Activated CD4-positive, alpha-beta memory T cell treated with anti-CD3 and anti-CD28 coated beads, Interleukin-2, amount 10 ng/mL, durations not matched to agents 7 days and 5 days (primary cell): ENCODE measurements at regions of chr1 and their contacts with region 1.

Region 1: DNA sequence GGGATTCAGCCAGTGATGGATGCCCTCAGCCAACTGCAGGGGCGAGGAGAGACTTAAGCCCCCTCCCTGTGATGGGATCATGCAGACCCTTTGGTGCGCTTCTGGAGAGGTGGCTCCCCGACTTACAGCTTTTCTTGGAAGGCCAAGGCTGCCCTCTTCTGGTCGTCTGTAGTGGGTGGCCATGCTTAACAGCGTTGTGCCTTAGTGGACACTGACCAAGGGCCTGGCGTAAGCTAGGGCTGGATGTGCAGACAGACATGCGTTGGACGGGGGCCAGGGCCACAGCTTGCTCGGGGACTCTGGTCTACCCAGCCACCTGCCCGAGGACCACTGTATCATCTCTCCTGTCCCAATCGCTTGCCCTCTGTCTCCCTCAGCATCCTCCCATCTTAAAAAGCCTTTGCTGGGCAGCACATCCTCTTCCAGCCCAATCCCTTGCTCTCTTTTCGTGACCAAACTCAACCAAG is 5.5 kb downstream of the AZIN2 start:
- DNase-seq: peak; percentile 56
- H3K4me3 Mint-ChIP-seq: no peak overlapping the region
- H3K27ac Mint-ChIP-seq: no peak overlapping the region
- H3K4me1 Mint-ChIP-seq: peaks cover 32% of the 10 kb centered on the region
- H3K27me3 Mint-ChIP-seq: peaks cover 16% of the 10 kb centered on the region

Region 2: GRCh38 chr1:32876341-32877210 is 209.8 kb before region 1 on chr1:
- CTCF ChIA-PET with region 1: interaction called, 40 read pairs
- POLR2A ChIA-PET with region 1: no interaction called
- DNase-seq: peak; percentile 74
- H3K4me3 Mint-ChIP-seq: no peak overlapping the region
- H3K27ac Mint-ChIP-seq: no peak overlapping the region
- H3K4me1 Mint-ChIP-seq: peaks cover 9% of the 10 kb centered on the region
- H3K27me3 Mint-ChIP-seq: peaks cover 39% of the 10 kb centered on the region

Region 3: DNA sequence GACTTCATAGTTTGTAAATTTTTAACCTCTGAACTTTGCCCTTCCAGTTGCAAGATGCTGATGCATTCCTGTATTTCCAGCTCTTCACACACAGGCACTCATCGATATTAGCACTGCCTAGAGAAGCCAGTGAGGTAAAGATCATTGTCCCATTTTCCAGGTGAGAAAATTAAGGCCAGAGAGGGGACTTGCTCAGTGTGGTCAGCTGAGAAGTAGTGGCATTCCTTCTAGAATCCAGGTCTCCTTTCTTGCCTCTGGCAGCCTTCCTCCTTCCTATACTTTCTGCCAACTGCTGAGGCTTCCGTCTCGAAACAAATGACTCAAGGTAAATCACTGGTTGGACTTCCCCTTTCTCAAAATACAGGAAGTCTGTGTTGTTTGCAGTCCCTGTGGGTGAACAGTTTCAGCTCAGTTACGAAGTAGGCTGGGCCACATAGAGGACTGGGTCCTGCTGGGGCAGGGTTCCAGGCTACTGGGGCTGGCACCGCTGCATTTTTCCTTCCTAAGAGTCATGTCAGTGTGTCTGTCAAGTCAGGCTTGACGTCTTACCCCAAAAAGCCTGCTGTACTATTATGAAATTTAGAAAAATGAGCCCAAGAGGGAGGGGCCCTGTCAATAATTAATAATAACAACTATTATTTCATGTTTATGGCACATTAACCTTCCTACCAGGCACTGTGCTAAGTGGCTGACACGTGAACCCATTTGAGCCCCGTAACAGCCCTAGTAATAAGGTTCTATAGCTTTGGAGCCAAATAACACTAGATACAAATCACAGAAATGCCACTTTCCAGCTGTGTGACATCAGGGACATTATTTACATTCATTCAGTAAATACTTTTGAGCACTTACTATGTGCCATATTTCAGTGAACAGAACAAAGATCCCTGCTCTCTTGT is 105.2 kb before region 1 on chr1:
- CTCF ChIA-PET with region 1: no interaction called
- POLR2A ChIA-PET with region 1: no interaction called
- DNase-seq: peak; percentile 73
- H3K4me3 Mint-ChIP-seq: peak overlapping the region; percentile 56
- H3K27ac Mint-ChIP-seq: peak overlapping the region; percentile 87
- H3K4me1 Mint-ChIP-seq: peaks cover 67% of the 10 kb centered on the region
- H3K27me3 Mint-ChIP-seq: no peaks in the 10 kb centered on the region

Region 4: GRCh38 chr1:33137800-33138199 is 51.4 kb after region 1 on chr1:
- CTCF ChIA-PET with region 1: no interaction called
- POLR2A ChIA-PET with region 1: no interaction called
- DNase-seq: peak; percentile 32
- H3K4me3 Mint-ChIP-seq: no peak overlapping the region
- H3K27ac Mint-ChIP-seq: no peak overlapping the region
- H3K4me1 Mint-ChIP-seq: peaks cover 13% of the 10 kb centered on the region
- H3K27me3 Mint-ChIP-seq: no peaks in the 10 kb centered on the region